ENCODE measurements at regions of chr3 and their contacts with region 1.

Region 1: GRCh38 chr3:30199096-30199759 is 407.2 kb upstream of the TGFBR2 start:
- DNase-seq: peak; percentile 81

Region 2: DNA sequence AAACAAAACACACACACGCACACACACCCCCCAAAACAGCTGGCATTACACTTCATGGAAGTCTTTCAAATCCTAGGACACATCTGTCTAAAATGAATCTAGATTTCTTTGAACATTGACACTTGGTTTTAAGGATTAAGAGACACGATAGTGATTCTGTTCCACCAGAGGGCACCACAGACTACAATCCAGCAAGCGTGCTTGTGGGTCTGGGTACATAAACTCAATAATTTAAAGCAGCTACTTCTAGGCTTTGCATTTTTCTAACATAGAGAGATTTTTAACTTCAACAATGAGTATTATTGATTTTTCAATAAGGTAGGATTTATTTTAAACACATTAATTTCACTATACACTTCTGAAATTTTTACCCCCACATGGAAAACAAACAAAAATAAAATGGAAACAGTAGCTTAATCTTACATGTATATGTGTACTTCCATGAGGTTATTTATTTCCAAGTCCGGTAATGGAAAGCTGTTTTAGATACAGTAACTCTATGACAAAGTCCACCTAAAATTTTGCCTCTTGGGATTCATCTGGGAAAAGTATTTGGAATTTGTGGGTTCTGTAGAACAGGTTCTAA is 156.9 kb before region 1 on chr3:
- intact Hi-C with region 1: loop called (anchors 2 kb)
- DNase-seq: no peak

Region 3: DNA sequence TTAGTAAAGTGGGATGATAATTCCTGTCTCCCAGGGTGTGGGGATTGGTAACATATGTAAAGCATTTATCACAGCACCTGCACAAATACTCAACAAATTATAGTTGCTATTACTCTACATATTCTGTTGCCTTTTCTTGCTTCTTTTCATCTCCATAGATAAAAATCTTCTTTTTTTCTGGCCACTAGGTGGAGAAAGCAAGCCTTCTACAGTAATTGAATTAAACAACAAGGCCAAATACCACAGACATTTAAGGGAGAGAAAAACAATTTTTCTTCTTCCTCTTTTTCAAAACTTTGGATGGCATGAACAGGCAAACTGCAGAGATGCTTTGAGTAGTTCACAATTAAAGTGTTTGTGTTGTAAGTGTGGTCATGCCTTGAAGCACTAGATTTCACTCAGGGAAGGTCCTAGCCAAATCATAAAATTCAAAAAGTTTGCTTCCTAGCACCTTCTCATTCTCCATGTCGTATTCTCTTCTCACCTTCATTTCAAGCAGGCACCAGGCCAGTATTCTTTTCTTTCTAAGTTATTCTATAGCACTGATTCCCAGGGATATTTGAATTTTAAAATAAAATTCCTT is 86.2 kb before region 1 on chr3:
- intact Hi-C with region 1: loop called (anchors 2 kb)
- DNase-seq: no peak

Region 4: GRCh38 chr3:30161375-30161774 is 37.9 kb before region 1 on chr3:
- intact Hi-C with region 1: loop called (anchors 5 kb)
- DNase-seq: no peak